Activated B cell treated with CpG ODN at 0.5 μM for 24 hours (primary cell): ENCODE measurements at regions of chr14 and their contacts with region 1.

Region 1: DNA sequence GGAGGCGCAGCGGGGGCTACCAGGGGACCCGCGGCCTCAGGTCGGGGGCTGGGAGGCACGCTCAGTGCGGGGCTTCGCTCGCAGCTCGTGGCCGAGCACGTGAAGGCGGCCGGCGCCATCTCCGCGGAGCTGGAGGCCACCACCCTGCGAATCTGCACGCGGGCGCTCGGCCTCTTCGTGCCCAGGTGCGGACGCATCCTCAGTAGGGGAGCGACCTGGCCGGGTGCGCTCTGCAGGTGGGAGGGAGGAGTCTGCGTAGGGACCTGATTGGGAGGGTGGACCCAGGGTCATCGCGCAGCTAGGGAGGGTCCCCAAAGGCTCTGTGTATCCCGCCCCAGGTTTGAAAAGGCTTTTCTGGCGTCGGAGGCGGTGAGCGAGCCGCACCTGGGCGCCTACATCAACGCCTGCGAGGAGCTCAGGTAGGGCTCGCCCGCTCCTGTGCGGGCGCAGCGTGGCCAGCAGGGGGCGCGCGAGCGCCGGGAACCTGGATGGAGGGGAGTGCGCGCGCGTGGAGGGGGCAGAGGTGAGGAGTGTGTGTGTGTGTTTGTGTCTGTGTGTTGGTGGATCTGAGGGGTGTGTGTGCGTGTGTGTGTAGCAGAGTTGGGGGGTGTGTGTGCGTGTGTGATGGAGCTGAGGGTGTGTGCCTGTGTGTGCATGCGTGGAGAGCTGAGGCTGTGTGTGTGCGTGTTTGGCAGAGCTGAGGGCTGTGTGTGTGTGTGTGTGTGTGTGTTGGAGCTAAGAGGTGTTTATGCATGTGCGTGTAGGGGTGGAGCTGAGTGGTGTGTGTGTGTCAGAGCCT is 10.3 kb downstream of the EXOC3L4 start:
- DNase-seq: peak; percentile 75
- ATAC-seq: peak; percentile 72
- H3K4me3 Mint-ChIP-seq: peak overlapping the region; percentile 11
- H3K27ac Mint-ChIP-seq: peak overlapping the region; percentile 18
- H3K4me1 Mint-ChIP-seq: peaks cover 40% of the 10 kb centered on the region
- H3K27me3 Mint-ChIP-seq: peaks cover 17% of the 10 kb centered on the region
- CTCF ChIP-seq: peak; percentile 50

Region 2: GRCh38 chr14:102711946-102712345 is 392.9 kb before region 1 on chr14:
- CTCF ChIA-PET with region 1: no interaction called
- POLR2A ChIA-PET with region 1: no interaction called
- intact Hi-C with region 1: no loop called
- DNase-seq: no peak
- ATAC-seq: no peak
- H3K4me3 Mint-ChIP-seq: no peak overlapping the region
- H3K27ac Mint-ChIP-seq: no peak overlapping the region
- H3K4me1 Mint-ChIP-seq: peaks cover 6% of the 10 kb centered on the region
- H3K27me3 Mint-ChIP-seq: no peaks in the 10 kb centered on the region
- CTCF ChIP-seq: no peak

Region 3: DNA sequence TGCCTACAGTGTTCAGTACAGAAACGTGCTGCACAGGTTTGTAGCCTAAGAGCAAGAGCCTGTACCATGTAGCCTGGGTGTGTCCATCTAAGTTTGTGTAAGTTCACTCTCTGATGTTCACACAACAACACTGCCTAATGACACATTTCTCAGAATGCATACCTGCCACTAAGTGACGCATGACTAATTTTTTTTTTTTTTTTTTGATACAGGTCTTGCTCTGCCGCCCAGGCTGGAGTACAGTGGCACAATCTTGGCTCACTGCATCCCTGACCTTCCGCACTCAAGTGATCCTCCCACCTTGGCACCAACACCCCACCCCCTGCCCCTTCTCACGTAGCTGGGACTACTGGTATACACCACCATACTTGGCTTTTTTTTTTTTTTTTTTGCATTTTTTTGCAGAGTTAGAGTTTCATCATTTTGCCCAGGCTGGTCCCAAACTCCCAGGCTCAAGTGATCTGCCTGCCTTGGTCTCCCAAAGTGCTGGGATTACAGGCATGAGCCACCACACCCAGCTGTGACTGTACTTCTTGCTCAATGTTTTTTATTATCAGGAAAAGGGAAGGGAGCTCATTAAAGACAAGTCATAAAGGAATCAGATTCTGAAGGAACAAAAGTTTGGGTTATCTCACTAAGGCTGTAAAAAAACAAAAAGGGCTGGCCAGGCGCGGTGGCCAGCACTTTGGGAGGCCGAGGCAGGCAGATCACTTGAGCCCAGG is 37.5 kb before region 1 on chr14:
- CTCF ChIA-PET with region 1: no interaction called
- POLR2A ChIA-PET with region 1: no interaction called
- intact Hi-C with region 1: no loop called
- DNase-seq: no peak
- ATAC-seq: no peak
- H3K4me3 Mint-ChIP-seq: no peak overlapping the region
- H3K27ac Mint-ChIP-seq: no peak overlapping the region
- H3K4me1 Mint-ChIP-seq: no peaks in the 10 kb centered on the region
- H3K27me3 Mint-ChIP-seq: peaks cover 3% of the 10 kb centered on the region
- CTCF ChIP-seq: no peak

Region 4: GRCh38 chr14:103078093-103078749 is 26.6 kb before region 1 on chr14:
- CTCF ChIA-PET with region 1: interaction called, 11 read pairs
- POLR2A ChIA-PET with region 1: interaction called, 3 read pairs
- intact Hi-C with region 1: loop called (anchors 1 kb)
- DNase-seq: peak; percentile 46
- ATAC-seq: peak; percentile 66
- H3K4me3 Mint-ChIP-seq: no peak overlapping the region
- H3K27ac Mint-ChIP-seq: no peak overlapping the region
- H3K4me1 Mint-ChIP-seq: peaks cover 5% of the 10 kb centered on the region
- H3K27me3 Mint-ChIP-seq: no peaks in the 10 kb centered on the region
- CTCF ChIP-seq: no peak

Region 5: GRCh38 chr14:103115883-103116572 is 11.2 kb after region 1 on chr14:
- CTCF ChIA-PET with region 1: interaction called, 13 read pairs
- POLR2A ChIA-PET with region 1: no interaction called
- intact Hi-C with region 1: no loop called
- DNase-seq: no peak
- ATAC-seq: no peak
- H3K4me3 Mint-ChIP-seq: no peak overlapping the region
- H3K27ac Mint-ChIP-seq: no peak overlapping the region
- H3K4me1 Mint-ChIP-seq: peaks cover 24% of the 10 kb centered on the region
- H3K27me3 Mint-ChIP-seq: peaks cover 4% of the 10 kb centered on the region
- CTCF ChIP-seq: no peak

Region 6: GRCh38 chr14:103141119-103141796 is 36.4 kb after region 1 on chr14:
- CTCF ChIA-PET with region 1: interaction called, 12 read pairs
- POLR2A ChIA-PET with region 1: no interaction called
- intact Hi-C with region 1: loop called (anchors 5 kb)
- DNase-seq: no peak
- ATAC-seq: no peak
- H3K4me3 Mint-ChIP-seq: no peak overlapping the region
- H3K27ac Mint-ChIP-seq: no peak overlapping the region
- H3K4me1 Mint-ChIP-seq: peaks cover 14% of the 10 kb centered on the region
- H3K27me3 Mint-ChIP-seq: peaks cover 36% of the 10 kb centered on the region
- CTCF ChIP-seq: no peak

Region 7: GRCh38 chr14:103292426-103293374 is 187.8 kb after region 1 on chr14:
- CTCF ChIA-PET with region 1: interaction called, 58 read pairs
- POLR2A ChIA-PET with region 1: interaction called, 4 read pairs
- intact Hi-C with region 1: loop called (anchors 1 kb)
- DNase-seq: peak; percentile 73
- ATAC-seq: peak; percentile 99
- H3K4me3 Mint-ChIP-seq: no peak overlapping the region
- H3K27ac Mint-ChIP-seq: no peak overlapping the region
- H3K4me1 Mint-ChIP-seq: peaks cover 6% of the 10 kb centered on the region
- H3K27me3 Mint-ChIP-seq: peaks cover 18% of the 10 kb centered on the region
- CTCF ChIP-seq: peak; percentile 24

Region 8: DNA sequence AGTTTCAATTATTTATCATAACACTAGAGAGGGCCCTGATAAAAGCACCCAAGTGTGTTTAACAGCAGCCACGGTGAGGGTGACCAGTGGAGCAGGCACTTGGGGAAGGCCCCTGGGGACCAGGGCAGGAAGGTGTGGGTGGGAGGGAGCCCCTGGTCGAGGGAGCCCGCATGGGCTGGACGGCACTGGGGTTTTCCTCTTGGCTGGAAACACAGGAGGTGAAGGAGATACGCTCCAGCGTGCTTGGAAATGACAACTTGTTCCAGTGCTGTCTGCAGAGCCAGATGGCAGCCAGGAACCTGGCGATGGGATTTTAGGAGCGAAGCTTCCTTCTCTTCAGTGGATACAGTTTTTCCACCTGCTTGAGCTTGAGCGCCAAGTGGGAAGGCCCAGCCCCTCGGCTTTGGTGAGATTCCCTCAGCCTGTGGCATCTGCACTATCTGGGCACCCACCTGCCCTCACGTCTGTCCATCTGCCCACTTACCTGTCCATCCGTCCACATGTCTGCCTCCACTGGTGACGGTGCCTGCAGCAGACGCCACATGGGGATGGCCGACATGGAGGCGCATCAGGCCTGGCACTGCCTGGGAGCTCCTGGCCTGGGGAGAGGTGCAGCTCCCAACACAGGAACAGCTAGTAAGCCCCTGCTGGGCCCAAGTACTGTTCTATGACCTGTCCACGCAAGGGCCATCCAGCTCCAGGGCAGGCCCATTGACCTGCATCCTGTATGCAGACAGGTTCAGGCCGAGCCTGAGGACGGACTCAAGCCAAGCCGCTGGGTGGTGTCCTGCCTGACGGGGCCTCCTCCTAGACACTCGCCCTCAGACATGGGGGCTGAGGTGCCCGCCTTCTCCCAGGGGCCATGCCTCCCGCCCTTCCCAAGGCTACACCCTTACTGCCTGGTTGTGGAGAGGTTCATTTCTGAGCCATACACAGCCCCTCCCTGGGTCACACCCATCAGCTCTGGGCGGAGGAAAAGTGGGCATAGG is 1282.5 kb after region 1 on chr14:
- CTCF ChIA-PET with region 1: no interaction called
- POLR2A ChIA-PET with region 1: no interaction called
- intact Hi-C with region 1: no loop called
- DNase-seq: no peak
- ATAC-seq: peak; percentile 66
- H3K4me3 Mint-ChIP-seq: peak overlapping the region; percentile 41
- H3K27ac Mint-ChIP-seq: no peak overlapping the region
- H3K4me1 Mint-ChIP-seq: peaks cover 63% of the 10 kb centered on the region
- H3K27me3 Mint-ChIP-seq: no peaks in the 10 kb centered on the region
- CTCF ChIP-seq: no peak